Body of pancreas (tissue), 4 donors: ENCODE measurements at regions of chr9 and their contacts with region 1.

Region 1: DNA sequence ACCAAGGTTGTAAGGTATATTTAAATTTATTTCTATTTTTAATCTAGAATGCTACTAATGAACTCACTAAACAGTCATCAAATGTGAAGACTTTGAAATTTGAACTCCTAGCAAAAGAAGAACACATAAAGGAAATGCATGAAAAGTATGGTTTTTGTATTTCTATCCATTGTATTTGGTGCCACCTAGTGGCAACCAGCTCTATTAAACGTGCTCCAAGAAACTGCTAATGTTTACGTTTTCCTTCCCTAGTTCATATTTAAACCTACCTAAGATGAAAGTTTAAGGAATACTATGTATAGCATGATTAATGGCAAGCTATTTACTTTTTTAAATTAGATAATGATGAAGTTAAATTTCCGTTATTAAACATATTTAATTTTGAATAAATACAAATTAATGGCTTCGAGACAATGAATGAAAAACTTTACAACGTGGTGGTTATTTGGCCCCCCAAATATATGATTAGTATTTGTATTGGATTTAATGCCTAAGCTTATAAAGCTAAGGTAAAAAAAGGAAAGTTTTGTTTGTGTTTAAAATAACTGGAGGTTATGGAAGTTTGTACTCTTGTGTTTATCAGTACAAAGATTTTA is 115.9 kb upstream of the SH3GL2 start:
- DNase-seq: peak; percentile 37 to 59 (median 43)
- ATAC-seq: no peak
- H3K4me3 ChIP-seq: no peak overlapping the region
- H3K27ac ChIP-seq: no peak overlapping the region
- H3K4me1 ChIP-seq: no peaks in the 10 kb centered on the region
- H3K27me3 ChIP-seq: no peaks in the 10 kb centered on the region
- CTCF ChIP-seq: peak; percentile 23 to 75 (median 70)
- POLR2A ChIP-seq: no peak

Region 2: GRCh38 chr9:17116400-17116837 is 346.5 kb before region 1 on chr9:
- intact Hi-C with region 1: loop called (anchors 10 kb)
- DNase-seq: no peak
- ATAC-seq: peak; percentile 38
- H3K4me3 ChIP-seq: no peak overlapping the region
- H3K27ac ChIP-seq: no peak overlapping the region
- H3K4me1 ChIP-seq: no peaks in the 10 kb centered on the region
- H3K27me3 ChIP-seq: no peaks in the 10 kb centered on the region
- CTCF ChIP-seq: peak in 6 of 7 experiments; percentile 35 to 56 (median 51)
- POLR2A ChIP-seq: no peak

Region 3: GRCh38 chr9:17481565-17481964 is 18.6 kb after region 1 on chr9:
- intact Hi-C with region 1: no loop called
- DNase-seq: no peak
- ATAC-seq: peak; percentile 27
- H3K4me3 ChIP-seq: no peak overlapping the region
- H3K27ac ChIP-seq: no peak overlapping the region
- H3K4me1 ChIP-seq: no peaks in the 10 kb centered on the region
- H3K27me3 ChIP-seq: no peaks in the 10 kb centered on the region
- CTCF ChIP-seq: no peak
- POLR2A ChIP-seq: no peak

Region 4: GRCh38 chr9:17556255-17556654 is 93.3 kb after region 1 on chr9:
- intact Hi-C with region 1: no loop called
- DNase-seq: no peak
- ATAC-seq: no peak
- H3K4me3 ChIP-seq: no peak overlapping the region
- H3K27ac ChIP-seq: no peak overlapping the region
- H3K4me1 ChIP-seq: no peaks in the 10 kb centered on the region
- H3K27me3 ChIP-seq: no peaks in the 10 kb centered on the region
- CTCF ChIP-seq: no peak
- POLR2A ChIP-seq: no peak